CD4-positive, alpha-beta T cell (primary cell): ENCODE measurements at regions of chr13 and their contacts with region 1.

Region 1: GRCh38 chr13:45332036-45332830 is 8.8 kb downstream of the TPT1 start:
- DNase-seq: peak in 1 of 14 experiments; percentile 18
- ATAC-seq: no peak
- H3K4me3 ChIP-seq: no peak overlapping the region
- H3K4me3 Mint-ChIP-seq: no peak overlapping the region
- H3K27ac ChIP-seq: no peak overlapping the region
- H3K27ac Mint-ChIP-seq: peak overlapping the region; percentile 84
- H3K4me1 ChIP-seq: peaks cover 84% of the 10 kb centered on the region
- H3K4me1 Mint-ChIP-seq: peaks cover 94% of the 10 kb centered on the region
- H3K27me3 ChIP-seq: no peaks in the 10 kb centered on the region
- H3K27me3 Mint-ChIP-seq: no peaks in the 10 kb centered on the region
- CTCF ChIP-seq: no peak

Region 2: GRCh38 chr13:45297456-45298205 is 34.6 kb before region 1 on chr13:
- CTCF ChIA-PET with region 1: no interaction called
- POLR2A ChIA-PET with region 1: interaction called, 4 read pairs
- intact Hi-C with region 1: loop called in 1 of 2 experiments (anchors 5 kb)
- DNase-seq: peak in 4 of 14 experiments; percentile 8 to 54 (median 48)
- ATAC-seq: peak; percentile 86
- H3K4me3 ChIP-seq: no peak overlapping the region
- H3K4me3 Mint-ChIP-seq: peak overlapping the region; percentile 23
- H3K27ac ChIP-seq: peak overlapping the region; percentile 44 to 53
- H3K27ac Mint-ChIP-seq: peak overlapping the region; percentile 76
- H3K4me1 ChIP-seq: peaks cover 33% of the 10 kb centered on the region
- H3K4me1 Mint-ChIP-seq: peaks cover 44% of the 10 kb centered on the region
- H3K27me3 ChIP-seq: no peaks in the 10 kb centered on the region
- H3K27me3 Mint-ChIP-seq: peaks cover 2% of the 10 kb centered on the region
- CTCF ChIP-seq: no peak

Region 3: GRCh38 chr13:45310341-45311125 is 21.7 kb before region 1 on chr13:
- CTCF ChIA-PET with region 1: interaction called, 5 read pairs
- POLR2A ChIA-PET with region 1: no interaction called
- intact Hi-C with region 1: loop called in 1 of 2 experiments (anchors 1 kb)
- DNase-seq: no peak
- ATAC-seq: no peak
- H3K4me3 ChIP-seq: peak overlapping the region; percentile 63
- H3K4me3 Mint-ChIP-seq: peak overlapping the region; percentile 85
- H3K27ac ChIP-seq: no peak overlapping the region
- H3K27ac Mint-ChIP-seq: no peak overlapping the region
- H3K4me1 ChIP-seq: peaks cover 24% of the 10 kb centered on the region
- H3K4me1 Mint-ChIP-seq: peaks cover 20% of the 10 kb centered on the region
- H3K27me3 ChIP-seq: no peaks in the 10 kb centered on the region
- H3K27me3 Mint-ChIP-seq: peaks cover 8% of the 10 kb centered on the region
- CTCF ChIP-seq: no peak